ENCODE measurements at regions of chrX and their contacts with region 1.

Region 1: DNA sequence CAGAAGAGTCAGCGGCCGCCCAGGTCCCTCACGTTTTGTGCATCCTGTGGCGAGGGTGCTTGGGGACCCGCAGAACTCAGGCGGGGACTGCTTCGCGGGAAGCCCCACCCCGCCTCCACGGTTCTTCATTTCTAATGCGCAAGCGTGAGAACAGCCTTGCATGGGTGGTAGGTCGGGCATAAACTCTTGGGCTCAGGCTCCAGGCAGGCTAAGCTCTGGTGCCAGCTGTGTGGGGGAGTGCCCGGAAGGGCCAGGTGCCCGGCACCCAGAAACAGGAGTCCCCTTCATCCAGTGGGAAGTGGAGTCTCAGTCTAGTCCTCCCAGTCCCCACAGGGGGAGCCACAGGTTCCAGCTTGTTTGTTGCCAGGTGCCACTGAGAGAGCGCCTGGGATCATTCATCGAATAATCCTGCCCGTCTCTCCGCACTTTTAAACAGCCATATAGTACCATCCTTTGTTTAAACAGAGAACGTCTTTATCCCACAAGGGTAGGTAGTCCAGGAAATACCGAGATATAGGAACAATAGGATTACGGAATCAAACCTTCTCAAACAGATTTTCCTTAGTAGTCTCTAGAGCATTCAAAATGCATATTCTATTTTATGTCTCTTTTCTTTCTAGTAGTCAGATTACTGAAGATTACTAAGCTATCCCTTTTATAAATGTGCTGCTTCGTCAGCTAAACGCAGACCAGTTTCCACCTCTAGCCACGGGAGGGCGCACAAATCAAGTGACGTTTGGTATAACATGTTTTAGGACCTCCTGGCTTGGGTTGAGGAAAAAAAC is 12.7 kb upstream of the RBBP7 start:
- DNase-seq: peak; percentile 76
- ATAC-seq: peak; percentile 86
- H3K4me3 Mint-ChIP-seq: peak overlapping the region; percentile 71
- H3K27ac Mint-ChIP-seq: peak overlapping the region; percentile 49
- H3K4me1 Mint-ChIP-seq: peaks cover 12% of the 10 kb centered on the region
- H3K27me3 Mint-ChIP-seq: peaks cover 8% of the 10 kb centered on the region

Region 2: DNA sequence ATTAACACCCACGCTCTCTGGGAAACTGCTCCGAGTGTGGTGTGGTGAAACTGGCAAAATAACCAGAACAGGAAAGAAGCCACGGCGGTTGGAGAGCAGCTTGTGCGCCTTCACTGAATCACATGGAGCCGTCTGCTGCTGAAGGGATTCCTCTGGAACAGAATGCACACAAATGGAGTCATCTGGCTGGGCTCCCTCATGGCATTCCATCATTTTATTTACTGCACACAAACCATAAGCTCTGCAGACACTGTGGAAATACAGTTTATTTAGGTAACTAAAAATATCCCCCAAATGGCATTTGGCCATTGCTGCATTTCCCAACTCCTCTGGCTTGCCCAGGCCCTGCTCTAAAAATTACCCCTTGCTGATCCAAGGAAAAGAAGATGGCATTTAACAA is 420.0 kb before region 1 on chrX:
- CTCF ChIA-PET with region 1: no interaction called
- POLR2A ChIA-PET with region 1: no interaction called
- DNase-seq: no peak
- ATAC-seq: no peak
- H3K4me3 Mint-ChIP-seq: no peak overlapping the region
- H3K27ac Mint-ChIP-seq: no peak overlapping the region
- H3K4me1 Mint-ChIP-seq: no peaks in the 10 kb centered on the region
- H3K27me3 Mint-ChIP-seq: no peaks in the 10 kb centered on the region

Region 3: GRCh38 chrX:16826207-16826606 is 56.7 kb before region 1 on chrX:
- CTCF ChIA-PET with region 1: interaction called, 25 read pairs
- POLR2A ChIA-PET with region 1: no interaction called
- DNase-seq: peak; percentile 20
- ATAC-seq: no peak
- H3K4me3 Mint-ChIP-seq: no peak overlapping the region
- H3K27ac Mint-ChIP-seq: no peak overlapping the region
- H3K4me1 Mint-ChIP-seq: peaks cover 6% of the 10 kb centered on the region
- H3K27me3 Mint-ChIP-seq: no peaks in the 10 kb centered on the region

Region 4: DNA sequence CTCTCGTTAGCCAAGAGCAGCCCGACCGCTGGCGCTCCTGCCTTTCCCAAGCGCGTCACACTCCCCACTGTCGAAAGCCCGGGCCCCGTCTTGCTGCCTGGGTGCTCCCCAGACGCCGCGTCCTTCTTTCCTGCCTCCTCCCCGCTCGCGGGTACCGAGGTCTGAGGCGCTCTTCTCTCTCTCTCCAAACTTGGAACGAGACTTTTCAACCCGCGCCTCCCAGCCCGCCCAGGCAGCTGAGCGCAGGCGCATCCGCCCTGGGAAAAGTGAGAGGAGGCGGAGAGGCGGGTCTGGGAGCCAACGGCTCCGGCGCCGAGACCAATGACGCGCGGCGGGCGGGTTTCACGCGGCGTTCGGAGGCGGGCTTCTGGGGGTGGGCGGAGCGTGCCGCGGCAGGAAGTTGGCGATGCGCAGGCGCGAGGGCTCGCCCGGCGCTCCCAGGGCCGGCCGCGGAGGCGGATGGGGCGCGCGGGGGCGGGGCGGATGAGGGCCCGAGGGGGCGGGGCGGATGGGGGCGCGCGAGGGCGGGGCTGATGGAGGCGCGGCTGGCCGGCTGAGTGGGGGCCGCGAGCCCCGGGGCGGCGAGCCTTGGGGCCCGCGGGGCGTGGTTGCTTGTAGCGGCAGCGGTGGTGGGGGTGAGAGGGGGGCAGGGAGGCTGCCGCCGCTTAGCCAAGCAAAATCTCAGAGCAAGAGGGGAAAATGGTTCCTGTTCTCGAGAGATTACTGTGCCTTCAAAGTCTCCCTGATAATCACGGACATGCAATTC is 12.6 kb before region 1 on chrX and contains the start of gene RBBP7:
- CTCF ChIA-PET with region 1: interaction called, 61 read pairs
- POLR2A ChIA-PET with region 1: interaction called, 21 read pairs
- DNase-seq: peak; percentile 90
- ATAC-seq: peak; percentile 89
- H3K4me3 Mint-ChIP-seq: peak within 1 kb of the TSS; percentile 92
- H3K27ac Mint-ChIP-seq: peak within 1 kb of the TSS; percentile 98
- H3K4me1 Mint-ChIP-seq: peaks cover 39% of the 10 kb centered on the region
- H3K27me3 Mint-ChIP-seq: peaks cover 6% of the 10 kb centered on the region
- total RNA-seq, gene RBBP7: 195 to 201 TPM

Region 5: DNA sequence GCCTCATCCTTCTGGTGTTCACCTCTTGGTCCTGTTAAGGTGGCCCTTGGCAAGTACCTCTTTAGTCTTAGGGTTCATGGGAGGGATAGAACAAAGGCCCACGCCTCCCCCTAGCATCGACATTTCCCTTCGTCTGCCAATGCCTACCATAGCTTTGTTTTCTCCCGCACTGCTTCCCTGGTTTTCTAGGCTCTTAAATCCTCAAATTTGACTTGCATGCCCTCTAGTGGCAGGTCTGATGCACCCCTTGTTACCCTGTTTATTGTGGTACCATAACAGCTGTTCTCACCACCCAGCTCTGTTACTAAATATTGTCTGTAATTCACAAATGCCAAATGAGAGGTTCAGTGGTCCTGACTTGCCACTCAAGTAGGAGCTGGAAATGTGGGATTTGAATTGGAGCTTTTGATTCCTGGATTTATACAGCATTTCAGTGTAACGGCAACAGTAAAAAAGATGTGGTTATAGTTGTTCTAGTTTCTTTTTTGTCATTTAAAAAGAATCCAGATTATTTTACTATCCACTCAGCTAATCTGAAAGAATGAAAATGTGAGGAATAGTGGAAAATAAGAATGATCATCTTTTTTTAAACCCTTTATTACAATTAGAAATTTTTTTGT is 163.7 kb after region 1 on chrX:
- CTCF ChIA-PET with region 1: interaction called, 35 read pairs
- POLR2A ChIA-PET with region 1: no interaction called
- DNase-seq: peak; percentile 43
- ATAC-seq: no peak
- H3K4me3 Mint-ChIP-seq: no peak overlapping the region
- H3K27ac Mint-ChIP-seq: no peak overlapping the region
- H3K4me1 Mint-ChIP-seq: no peaks in the 10 kb centered on the region
- H3K27me3 Mint-ChIP-seq: no peaks in the 10 kb centered on the region

Measured in activated CD8-positive, alpha-beta T cell treated with anti-CD3 and anti-CD28 coated beads, Interleukin-2, amount 10 ng/mL, durations not matched to agents 7 days and 5 days (primary cell).